ENCODE measurements at regions of chr2 and their contacts with region 1.

Region 1: DNA sequence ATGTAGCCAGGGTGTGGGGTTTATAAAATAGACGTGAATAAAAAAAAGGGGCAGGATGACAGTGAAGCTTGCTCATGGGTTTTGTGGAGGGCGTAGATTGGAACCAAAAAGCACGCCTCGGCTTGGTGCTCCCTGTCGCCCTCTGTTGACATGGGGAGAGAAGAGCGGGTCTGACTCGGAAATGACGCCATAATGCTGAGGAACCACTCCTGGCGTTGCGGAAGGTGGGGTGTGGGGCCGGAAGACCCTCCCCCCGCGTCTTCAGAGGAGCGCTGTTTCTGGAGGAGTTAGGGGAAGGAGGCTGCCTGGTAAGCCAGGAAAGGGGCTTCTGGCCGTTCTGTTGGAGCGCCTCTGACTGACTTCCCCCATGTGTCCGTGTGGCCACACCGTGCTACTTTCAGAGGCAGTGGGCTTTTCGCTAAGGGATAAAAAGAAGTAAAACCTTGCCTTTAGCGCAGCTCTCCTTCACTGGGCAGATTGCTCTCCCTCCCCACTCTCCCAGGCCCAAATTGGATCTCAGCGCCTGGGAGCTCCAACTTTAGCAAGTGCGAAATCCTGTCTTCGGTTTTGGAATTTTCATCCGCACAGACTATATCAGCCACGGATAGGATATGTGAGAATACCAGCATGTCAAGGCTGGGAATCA is 42.8 kb downstream of the PLEKHA3 start:
- DNase-seq: peak; percentile 65 to 85 (median 80)
- ATAC-seq: peak; percentile 100
- H3K4me3 ChIP-seq: peak overlapping the region; percentile 93
- H3K4me3 Mint-ChIP-seq: peak overlapping the region; percentile 84 to 96 (median 94)
- H3K27ac ChIP-seq: peak overlapping the region; percentile 75
- H3K27ac Mint-ChIP-seq: peak overlapping the region; percentile 80 to 96 (median 91)
- H3K4me1 ChIP-seq: peaks cover 7 to 10% of the 10 kb centered on the region in 2 donors
- H3K4me1 Mint-ChIP-seq: peaks cover 14 to 58% (median 22%) of the 10 kb centered on the region in 7 donors
- H3K27me3 ChIP-seq: no peaks in the 10 kb centered on the region
- H3K27me3 Mint-ChIP-seq: no peaks in the 10 kb centered on the region

Region 2: DNA sequence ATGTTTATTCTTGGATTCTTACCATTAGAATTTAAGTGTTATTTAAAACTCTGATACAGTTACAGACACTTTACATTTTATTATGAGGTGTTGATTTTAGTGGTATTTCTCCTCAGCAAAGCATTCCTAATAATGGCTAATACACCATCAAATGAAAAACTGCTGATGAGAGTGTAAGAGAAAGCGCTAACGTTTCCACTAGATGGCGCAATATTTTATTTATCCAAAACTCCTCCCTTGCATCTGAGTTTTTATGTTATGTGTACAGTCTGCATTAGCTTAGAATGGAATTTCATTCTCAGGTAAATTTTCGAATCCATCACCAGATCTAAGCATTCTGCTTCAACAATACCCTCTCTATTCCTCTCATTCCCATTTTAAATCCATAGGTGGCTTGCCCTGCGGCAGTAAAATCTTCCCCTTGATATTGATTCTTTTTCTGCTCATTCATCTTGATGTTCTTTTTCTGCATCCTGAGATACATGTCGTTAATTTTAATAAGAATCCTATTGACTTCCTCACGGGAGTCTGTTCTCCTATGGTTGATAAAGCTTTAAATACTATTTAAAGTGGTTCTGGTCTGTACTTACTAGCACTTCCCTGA is 126.0 kb before region 1 on chr2:
- CTCF ChIA-PET with region 1: no interaction called
- POLR2A ChIA-PET with region 1: no interaction called
- intact Hi-C with region 1: loop called (anchors 1 to 5 kb)
- DNase-seq: peak in 6 of 9 donors; percentile 5 to 44 (median 30)
- ATAC-seq: peak; percentile 75
- H3K4me3 ChIP-seq: no peak overlapping the region
- H3K4me3 Mint-ChIP-seq: no peak overlapping the region
- H3K27ac ChIP-seq: no peak overlapping the region
- H3K27ac Mint-ChIP-seq: no peak overlapping the region
- H3K4me1 ChIP-seq: no peaks in the 10 kb centered on the region
- H3K4me1 Mint-ChIP-seq: peaks cover 0 to 6% (median 0%) of the 10 kb centered on the region in 7 donors
- H3K27me3 ChIP-seq: no peaks in the 10 kb centered on the region
- H3K27me3 Mint-ChIP-seq: peaks cover 0 to 32% (median 5%) of the 10 kb centered on the region in 5 donors

Region 3: GRCh38 chr2:178450774-178451525 is 72.1 kb before region 1 on chr2 and contains the starts of genes PJVK and PRKRA:
- CTCF ChIA-PET with region 1: no interaction called
- POLR2A ChIA-PET with region 1: interaction called, 4 read pairs
- intact Hi-C with region 1: loop called (anchors 1 kb)
- DNase-seq: peak; percentile 92 to 99 (median 93)
- ATAC-seq: peak; percentile 94
- H3K4me3 ChIP-seq: peak within 1 kb of the TSS; percentile 94
- H3K4me3 Mint-ChIP-seq: peak within 1 kb of the TSS; percentile 90 to 96 (median 90)
- H3K27ac ChIP-seq: peak within 1 kb of the TSS; percentile 100
- H3K27ac Mint-ChIP-seq: peak within 1 kb of the TSS; percentile 88 to 98 (median 95)
- H3K4me1 ChIP-seq: peaks cover 12 to 25% of the 10 kb centered on the region in 2 donors
- H3K4me1 Mint-ChIP-seq: peaks cover 12 to 36% (median 30%) of the 10 kb centered on the region in 7 donors
- H3K27me3 ChIP-seq: no peaks in the 10 kb centered on the region
- H3K27me3 Mint-ChIP-seq: peaks cover 0 to 9% (median 0%) of the 10 kb centered on the region in 5 donors
- total RNA-seq, gene PJVK: 2.1 to 6.3 (median 3.8) TPM
- total RNA-seq, gene PRKRA: 40.8 to 113 (median 59.4) TPM

Region 4: DNA sequence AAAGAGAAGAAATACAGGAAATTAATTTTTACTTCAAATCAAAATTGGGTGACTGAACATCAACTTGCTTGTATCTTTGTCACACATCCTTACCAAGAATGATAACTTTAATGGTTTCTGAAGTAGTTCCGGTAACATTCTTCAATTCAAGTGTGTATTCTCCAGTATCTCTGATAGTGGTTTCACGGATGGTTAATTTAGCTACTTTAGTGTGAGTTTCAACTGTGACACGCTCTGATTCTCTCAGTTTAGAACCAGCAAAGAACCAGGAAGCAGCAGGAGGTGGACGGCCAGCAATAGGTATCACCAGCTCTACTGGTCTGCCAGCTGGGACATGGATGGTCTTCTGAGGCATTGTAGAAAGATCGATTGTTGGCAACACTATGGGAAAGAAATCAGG is 19.5 kb after region 1 on chr2:
- CTCF ChIA-PET with region 1: no interaction called
- POLR2A ChIA-PET with region 1: no interaction called
- intact Hi-C with region 1: no loop called
- DNase-seq: no peak
- ATAC-seq: no peak
- H3K4me3 ChIP-seq: no peak overlapping the region
- H3K4me3 Mint-ChIP-seq: no peak overlapping the region
- H3K27ac ChIP-seq: no peak overlapping the region
- H3K27ac Mint-ChIP-seq: peak overlapping the region in 1 of 9 donors; percentile 15
- H3K4me1 ChIP-seq: no peaks in the 10 kb centered on the region
- H3K4me1 Mint-ChIP-seq: peaks cover 0 to 10% (median 7%) of the 10 kb centered on the region in 7 donors
- H3K27me3 ChIP-seq: no peaks in the 10 kb centered on the region
- H3K27me3 Mint-ChIP-seq: no peaks in the 10 kb centered on the region

Region 5: GRCh38 chr2:178553047-178553446 is 30.0 kb after region 1 on chr2:
- CTCF ChIA-PET with region 1: no interaction called
- POLR2A ChIA-PET with region 1: no interaction called
- intact Hi-C with region 1: no loop called
- DNase-seq: no peak
- ATAC-seq: no peak
- H3K4me3 ChIP-seq: no peak overlapping the region
- H3K4me3 Mint-ChIP-seq: no peak overlapping the region
- H3K27ac ChIP-seq: no peak overlapping the region
- H3K27ac Mint-ChIP-seq: no peak overlapping the region
- H3K4me1 ChIP-seq: no peaks in the 10 kb centered on the region
- H3K4me1 Mint-ChIP-seq: peaks cover 0 to 18% (median 0%) of the 10 kb centered on the region in 7 donors
- H3K27me3 ChIP-seq: no peaks in the 10 kb centered on the region
- H3K27me3 Mint-ChIP-seq: no peaks in the 10 kb centered on the region